ENCODE measurements at regions of chr10 and their contacts with region 1.

Region 1: GRCh38 chr10:58177362-58177947 is 90.2 kb downstream of the IPMK start:
- DNase-seq: no peak
- ATAC-seq: peak in 1 of 2 donors; percentile 50
- H3K4me3 ChIP-seq: no peak overlapping the region
- H3K27ac ChIP-seq: no peak overlapping the region
- H3K4me1 ChIP-seq: no peaks in the 10 kb centered on the region
- H3K27me3 ChIP-seq: no peaks in the 10 kb centered on the region
- CTCF ChIP-seq: peak; percentile 50 to 69 (median 64)
- POLR2A ChIP-seq: no peak

Region 2: DNA sequence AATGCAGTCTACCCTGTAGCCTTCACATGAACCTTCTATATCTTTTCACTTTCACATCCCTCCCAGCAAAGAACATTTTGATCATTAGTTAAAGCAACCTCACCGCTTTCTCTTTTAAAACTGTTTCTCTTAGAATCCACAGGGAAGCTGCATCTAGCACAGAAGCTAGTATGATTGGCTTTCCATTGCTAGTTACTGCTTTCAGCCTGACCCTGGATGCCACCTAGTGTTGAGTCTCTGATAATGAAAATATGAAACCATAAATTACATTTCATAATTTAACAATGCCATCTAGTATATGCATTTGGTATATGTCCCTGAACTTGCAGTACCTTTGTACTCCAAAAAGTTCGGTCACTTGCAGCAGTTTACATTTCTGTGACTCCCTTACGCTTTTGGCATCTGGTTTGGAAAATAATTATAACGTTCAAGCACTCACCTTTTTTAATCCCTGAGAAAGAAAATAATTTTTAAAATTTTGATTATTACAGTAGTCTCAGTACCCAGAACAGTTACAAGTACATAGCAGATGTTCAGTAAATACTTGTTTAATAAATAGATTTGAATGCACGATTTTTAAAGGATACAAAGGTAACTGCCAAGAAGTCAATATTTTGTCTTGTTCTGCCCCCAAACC is 114.2 kb after region 1 on chr10:
- in situ Hi-C with region 1: loop called in 3 of 4 experiments (anchors 5 kb)
- intact Hi-C with region 1: loop called (anchors 1 kb)
- DNase-seq: no peak
- ATAC-seq: peak; percentile 75 to 84
- H3K4me3 ChIP-seq: no peak overlapping the region
- H3K27ac ChIP-seq: no peak overlapping the region
- H3K4me1 ChIP-seq: no peaks in the 10 kb centered on the region
- H3K27me3 ChIP-seq: no peaks in the 10 kb centered on the region
- CTCF ChIP-seq: peak; percentile 56 to 76 (median 73)
- POLR2A ChIP-seq: no peak